ENCODE measurements at regions of chr18 and their contacts with region 1.

Region 1: DNA sequence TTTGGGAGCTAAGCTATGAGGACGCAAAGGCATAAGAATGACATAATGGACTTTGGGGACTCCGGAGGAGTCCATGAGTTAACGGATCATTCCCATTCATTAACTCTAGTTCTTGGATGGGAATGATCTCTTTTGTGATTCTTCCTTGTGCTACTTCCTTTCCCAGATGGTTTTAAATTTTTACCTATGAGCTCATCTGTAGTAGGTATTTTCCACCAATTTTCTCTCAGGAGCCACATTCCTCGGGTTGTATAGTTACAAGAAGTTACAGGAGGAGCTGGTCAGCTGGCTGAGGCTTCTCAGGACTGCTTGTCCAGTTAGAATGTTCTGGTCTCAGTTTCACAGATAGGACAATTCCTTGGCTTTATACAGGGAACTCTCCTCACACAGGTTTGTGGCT is 42.9 kb upstream of the LPIN2 start:
- DNase-seq: no peak
- H3K4me3 Mint-ChIP-seq: no peak overlapping the region
- H3K27ac Mint-ChIP-seq: no peak overlapping the region
- H3K4me1 Mint-ChIP-seq: peaks cover 60% of the 10 kb centered on the region
- H3K27me3 Mint-ChIP-seq: no peaks in the 10 kb centered on the region

Region 2: DNA sequence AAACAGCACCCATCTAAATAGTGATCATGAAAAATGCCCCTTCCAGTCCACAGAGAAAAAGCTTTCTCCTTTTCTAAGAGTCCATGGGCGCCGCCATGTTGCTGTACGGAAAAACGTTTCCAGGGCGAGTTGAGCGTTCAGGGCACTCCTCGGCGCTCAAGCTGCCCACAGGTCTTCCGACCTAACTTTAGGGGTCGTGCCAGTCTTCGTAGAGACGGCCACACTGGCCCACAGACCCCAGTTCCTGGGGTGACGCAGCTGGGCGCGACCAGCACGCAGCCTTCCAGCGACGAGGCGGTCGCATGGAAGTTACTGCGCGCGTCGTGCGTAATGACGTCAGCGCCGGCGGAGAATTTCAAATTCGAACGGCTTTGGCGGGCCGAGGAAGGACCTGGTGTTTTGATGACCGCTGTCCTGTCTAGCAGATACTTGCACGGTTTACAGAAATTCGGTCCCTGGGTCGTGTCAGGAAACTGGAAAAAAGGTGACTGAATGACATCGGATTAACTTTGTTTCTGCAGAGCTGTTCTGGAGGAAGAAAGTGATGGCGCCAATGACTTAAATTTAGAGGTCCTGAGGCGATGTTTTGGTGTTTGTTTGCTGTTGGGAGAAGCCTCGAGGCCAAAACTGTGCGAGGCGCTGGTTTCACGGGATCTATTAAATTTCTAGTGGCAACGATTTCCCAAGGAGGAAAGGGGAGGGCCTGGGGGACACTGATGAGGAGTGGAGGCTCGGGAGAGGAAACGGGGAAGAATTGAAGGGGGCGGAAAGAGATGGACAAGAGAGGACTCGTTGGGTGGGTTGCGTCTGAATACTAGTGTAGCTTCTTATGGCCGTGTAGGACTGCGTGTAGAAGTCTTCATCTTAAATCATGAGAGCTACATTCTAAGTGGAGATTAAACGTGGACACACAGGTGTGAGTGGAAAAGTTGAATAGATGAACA is 484.3 kb before region 1 on chr18 and contains the starts of genes METTL4 and NDC80:
- CTCF ChIA-PET with region 1: no interaction called
- POLR2A ChIA-PET with region 1: no interaction called
- DNase-seq: peak; percentile 86
- H3K4me3 Mint-ChIP-seq: peak within 1 kb of the TSS; percentile 96
- H3K27ac Mint-ChIP-seq: peak within 1 kb of the TSS; percentile 99
- H3K4me1 Mint-ChIP-seq: peaks cover 65% of the 10 kb centered on the region
- H3K27me3 Mint-ChIP-seq: no peaks in the 10 kb centered on the region
- total RNA-seq, gene METTL4: 20.3 to 25.5 TPM
- total RNA-seq, gene NDC80: 92.3 to 96.5 TPM

Region 3: DNA sequence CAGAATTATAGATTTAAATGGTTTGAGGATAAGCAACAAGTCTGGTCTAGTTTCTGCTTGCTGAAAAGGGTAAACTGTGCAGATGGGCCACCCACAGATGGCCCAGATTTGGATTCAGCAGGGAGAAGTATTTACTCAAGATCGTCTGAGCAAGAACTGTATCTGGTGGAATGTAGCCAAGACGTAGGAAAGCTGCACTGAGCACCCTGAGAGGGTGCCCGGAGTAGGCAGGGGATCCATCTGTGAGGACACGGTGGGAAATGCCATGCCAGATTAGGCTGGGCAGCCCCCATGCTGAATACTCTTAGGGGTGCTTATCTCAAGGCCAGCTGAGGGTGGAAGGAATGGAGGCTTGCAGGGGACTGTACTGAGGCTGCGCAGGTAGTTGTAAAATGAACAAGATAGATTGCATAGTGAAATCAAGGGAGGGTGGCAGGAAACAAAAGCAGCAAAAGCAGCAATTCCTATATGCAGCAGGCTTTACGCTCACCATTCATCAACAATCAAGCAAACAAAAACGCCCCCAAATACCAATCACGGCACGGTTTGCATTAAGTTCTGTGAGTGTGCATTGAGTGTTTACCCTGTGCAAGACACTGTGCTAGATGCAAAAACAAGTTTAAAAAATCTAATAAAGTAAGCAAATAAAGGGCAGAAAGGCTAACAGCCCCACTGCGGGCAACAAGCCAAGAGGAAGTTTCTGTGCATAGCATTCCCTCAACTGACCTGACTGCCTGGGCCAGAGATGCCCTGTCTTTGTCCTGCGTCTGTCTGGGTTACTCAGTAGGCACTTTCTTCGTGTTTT is 10.7 kb before region 1 on chr18:
- CTCF ChIA-PET with region 1: interaction called, 13 read pairs
- POLR2A ChIA-PET with region 1: no interaction called
- DNase-seq: no peak
- H3K4me3 Mint-ChIP-seq: no peak overlapping the region
- H3K27ac Mint-ChIP-seq: peak overlapping the region; percentile 0
- H3K4me1 Mint-ChIP-seq: peaks cover 29% of the 10 kb centered on the region
- H3K27me3 Mint-ChIP-seq: no peaks in the 10 kb centered on the region

Measured in activated CD4-positive, alpha-beta T cell treated with anti-CD3 and anti-CD28 coated beads, Interleukin-2, amount 10 ng/mL, durations not matched to agents 7 days and 5 days (primary cell).